HepG2 (cell line): ENCODE measurements at regions of chr11 and their contacts with region 1.

Region 1: DNA sequence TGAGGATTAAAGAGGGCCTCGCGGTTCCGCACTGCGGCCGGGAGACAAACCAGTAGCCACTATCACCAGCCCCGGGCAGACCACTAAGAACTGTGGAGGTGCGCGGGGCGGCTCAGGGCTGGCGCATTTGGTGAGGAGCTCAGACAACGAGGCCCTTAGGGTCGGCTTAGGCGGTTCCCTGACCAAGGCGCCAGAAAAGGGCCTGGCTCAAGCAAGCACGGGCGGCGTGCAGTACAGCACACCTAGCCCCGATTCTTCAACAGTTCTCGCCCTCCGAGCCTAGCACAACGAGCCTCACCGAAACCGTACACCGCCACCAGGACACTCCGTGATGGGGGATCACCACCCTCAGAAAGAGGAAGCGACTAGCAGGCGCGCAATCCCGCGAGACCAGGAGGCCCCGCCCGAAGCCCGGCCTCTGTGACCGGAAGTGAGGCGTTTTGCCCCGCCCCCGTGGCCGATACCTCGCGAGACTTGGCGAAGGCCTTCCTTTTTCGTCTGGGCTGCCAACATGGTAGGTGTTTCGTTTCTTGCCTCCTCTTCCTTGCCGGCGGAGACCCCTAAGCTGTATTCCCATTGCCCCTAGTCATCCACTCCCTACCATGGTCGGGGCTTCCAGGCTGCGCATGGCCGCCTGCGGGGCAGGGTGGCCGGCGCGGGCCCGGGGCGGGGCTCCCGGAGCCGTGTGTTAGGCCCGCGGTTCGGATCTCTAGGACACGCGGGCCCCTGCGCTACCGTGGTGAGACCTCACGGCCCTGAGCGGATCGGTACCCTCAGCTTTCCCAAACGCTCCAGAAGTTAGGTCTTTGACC is at the starts of genes RPL27A and TRIM66:
- DNase-seq: peak; percentile 92
- ATAC-seq: peak; percentile 93
- H3K4me3 ChIP-seq: peak within 1 kb of the TSS; percentile 96 to 100 (median 99)
- H3K27ac ChIP-seq: peak within 1 kb of the TSS; percentile 97
- H3K4me1 ChIP-seq: peaks cover 73% of the 10 kb centered on the region
- H3K27me3 ChIP-seq: peaks cover 0 to 7% of the 10 kb centered on the region in 2 experiments; a peak in 1 of 5 replicates
- CTCF ChIP-seq: peak; percentile 26
- EP300 ChIP-seq: no peak; a peak in 1 of 4 replicates
- POLR2A ChIP-seq: peak; percentile 99
- RAD21 ChIP-seq: peak; percentile 20; the same call in 1 of the 2 replicates
- total RNA-seq, gene RPL27A: 2,153 and 2,707 TPM in 2 replicates
- total RNA-seq, gene TRIM66: 4.9 and 5.6 TPM in 2 replicates

Region 2: GRCh38 chr11:8665222-8665621 is 17.3 kb before region 1 on chr11:
- CTCF ChIA-PET with region 1: no interaction called
- POLR2A ChIA-PET with region 1: interaction called, 11 read pairs
- in situ Hi-C with region 1: no loop called
- intact Hi-C with region 1: loop called (anchors 1 kb)
- DNase-seq: no peak
- ATAC-seq: peak; percentile 83
- H3K4me3 ChIP-seq: no peak overlapping the region
- H3K27ac ChIP-seq: peak overlapping the region; percentile 19
- H3K4me1 ChIP-seq: peaks cover 16% of the 10 kb centered on the region
- H3K27me3 ChIP-seq: no peaks in the 10 kb centered on the region
- CTCF ChIP-seq: no peak
- EP300 ChIP-seq: no peak
- POLR2A ChIP-seq: no peak
- RAD21 ChIP-seq: no peak

Region 3: DNA sequence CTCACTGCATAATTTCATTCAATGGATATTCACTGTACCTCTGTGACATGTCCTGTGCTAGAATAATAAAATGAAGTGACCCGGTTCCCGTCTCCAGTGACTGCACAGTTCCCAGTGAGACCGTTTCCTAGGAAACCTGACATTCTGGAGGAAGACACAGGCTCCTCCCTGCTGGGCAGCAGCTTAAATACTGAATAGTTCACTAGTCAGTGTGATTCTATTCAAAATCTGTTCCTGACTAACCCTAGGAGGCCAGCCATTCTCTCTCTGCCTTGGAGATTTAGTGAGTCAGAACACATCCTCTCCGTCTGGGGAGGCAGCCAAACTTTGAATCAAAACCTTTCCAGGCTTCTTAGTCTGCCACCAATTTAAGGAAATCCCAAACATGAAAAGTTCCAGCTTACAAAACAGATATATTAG is 11.3 kb before region 1 on chr11:
- CTCF ChIA-PET with region 1: no interaction called
- POLR2A ChIA-PET with region 1: no interaction called
- in situ Hi-C with region 1: no loop called
- intact Hi-C with region 1: loop called (anchors 1 kb)
- DNase-seq: no peak
- ATAC-seq: no peak
- H3K4me3 ChIP-seq: no peak overlapping the region
- H3K27ac ChIP-seq: no peak overlapping the region
- H3K4me1 ChIP-seq: no peaks in the 10 kb centered on the region
- H3K27me3 ChIP-seq: no peaks in the 10 kb centered on the region
- CTCF ChIP-seq: no peak
- EP300 ChIP-seq: no peak
- POLR2A ChIP-seq: no peak
- RAD21 ChIP-seq: no peak

Region 4: DNA sequence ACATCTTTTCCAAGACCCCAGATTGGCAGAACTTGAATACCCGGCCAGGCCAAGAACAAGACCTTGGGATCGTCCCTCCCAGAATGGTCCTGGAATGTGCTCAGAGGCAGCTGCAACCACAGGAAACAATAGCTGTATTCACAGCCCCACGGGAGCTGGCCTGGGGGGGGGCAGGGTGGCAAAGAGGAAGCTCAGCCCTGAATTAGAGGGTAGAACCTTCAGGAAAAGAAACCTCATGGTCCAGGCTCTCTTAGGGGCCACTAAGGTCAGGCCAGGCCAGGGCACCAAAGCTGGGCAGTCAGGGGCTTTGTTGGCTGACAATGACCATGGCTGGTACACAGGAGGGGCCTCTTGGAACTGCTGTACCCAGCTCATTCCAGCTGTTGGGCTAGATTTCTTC is 17.4 kb after region 1 on chr11:
- CTCF ChIA-PET with region 1: no interaction called
- POLR2A ChIA-PET with region 1: interaction called, 47 read pairs
- in situ Hi-C with region 1: no loop called
- intact Hi-C with region 1: no loop called
- DNase-seq: peak; percentile 84
- ATAC-seq: peak; percentile 56
- H3K4me3 ChIP-seq: no peak overlapping the region
- H3K27ac ChIP-seq: peak overlapping the region; percentile 63
- H3K4me1 ChIP-seq: peaks cover 35% of the 10 kb centered on the region
- H3K27me3 ChIP-seq: no peaks in the 10 kb centered on the region
- CTCF ChIP-seq: no peak
- EP300 ChIP-seq: 0 out of 4 replicates have a peak, but pooled peaks of 1 of the 2 experiments have one; percentile 29
- POLR2A ChIP-seq: 0 out of 4 replicates have a peak, but pooled peaks have one; percentile 13 to 21
- RAD21 ChIP-seq: peak; percentile 16; the same call in 1 of the 2 replicates

Region 5: GRCh38 chr11:8717876-8718753 is 35.6 kb after region 1 on chr11:
- CTCF ChIA-PET with region 1: no interaction called
- POLR2A ChIA-PET with region 1: interaction called, 12 read pairs
- in situ Hi-C with region 1: no loop called
- intact Hi-C with region 1: no loop called
- DNase-seq: peak; percentile 83
- ATAC-seq: peak; percentile 64
- H3K4me3 ChIP-seq: peak overlapping the region in 1 of 3 experiments; percentile 29; a peak in 2 of 6 replicates
- H3K27ac ChIP-seq: peak overlapping the region; percentile 86
- H3K4me1 ChIP-seq: peaks cover 98% of the 10 kb centered on the region
- H3K27me3 ChIP-seq: no peaks in the 10 kb centered on the region
- CTCF ChIP-seq: no peak
- EP300 ChIP-seq: peak in 1 of 2 experiments; percentile 23; a peak in 1 of 4 replicates
- POLR2A ChIP-seq: peak in 1 of 2 experiments; percentile 39; a peak in 1 of 4 replicates
- RAD21 ChIP-seq: no peak

Region 6: DNA sequence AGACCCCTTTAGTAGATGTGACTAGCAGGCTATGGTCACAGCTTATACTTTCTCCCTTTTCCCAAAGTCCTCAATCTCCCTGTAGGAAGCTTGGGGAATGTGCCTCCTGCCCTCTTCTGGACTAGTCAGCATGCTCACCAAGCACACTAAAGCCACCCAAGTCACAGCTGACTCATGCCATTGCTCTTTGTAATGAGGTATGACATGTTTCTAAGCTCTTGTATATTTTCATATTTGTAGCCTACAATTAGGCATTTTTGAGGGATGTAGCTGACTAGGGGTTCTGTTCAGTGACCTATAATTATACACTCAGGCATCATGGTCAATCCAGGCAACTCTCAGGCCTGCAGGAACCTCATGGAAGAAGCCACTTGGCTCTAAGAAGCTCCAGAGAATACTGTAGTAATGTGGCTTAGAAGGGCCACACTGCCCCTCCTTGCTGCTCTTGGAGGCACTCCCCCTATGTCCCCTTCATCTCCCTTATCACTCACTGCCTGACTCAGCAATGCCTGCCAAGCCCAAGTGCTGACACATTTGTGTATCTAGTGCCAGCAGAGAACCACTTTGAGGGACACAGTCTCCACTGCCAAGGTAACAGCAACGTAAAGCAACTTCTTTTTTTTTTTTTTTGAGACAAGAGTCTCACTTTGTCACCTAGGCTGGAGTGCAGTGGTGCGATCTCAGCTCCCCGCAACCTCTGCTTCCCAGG is 86.3 kb after region 1 on chr11:
- CTCF ChIA-PET with region 1: no interaction called
- POLR2A ChIA-PET with region 1: no interaction called
- in situ Hi-C with region 1: no loop called
- intact Hi-C with region 1: no loop called
- DNase-seq: peak; percentile 39
- ATAC-seq: peak; percentile 67
- H3K4me3 ChIP-seq: no peak overlapping the region
- H3K27ac ChIP-seq: no peak overlapping the region
- H3K4me1 ChIP-seq: 0 out of 2 replicates have a peak, but pooled peaks cover 7% of the 10 kb centered on the region
- H3K27me3 ChIP-seq: no peaks in the 10 kb centered on the region
- CTCF ChIP-seq: peak; percentile 46
- EP300 ChIP-seq: no peak
- POLR2A ChIP-seq: no peak
- RAD21 ChIP-seq: no peak

Region 7: DNA sequence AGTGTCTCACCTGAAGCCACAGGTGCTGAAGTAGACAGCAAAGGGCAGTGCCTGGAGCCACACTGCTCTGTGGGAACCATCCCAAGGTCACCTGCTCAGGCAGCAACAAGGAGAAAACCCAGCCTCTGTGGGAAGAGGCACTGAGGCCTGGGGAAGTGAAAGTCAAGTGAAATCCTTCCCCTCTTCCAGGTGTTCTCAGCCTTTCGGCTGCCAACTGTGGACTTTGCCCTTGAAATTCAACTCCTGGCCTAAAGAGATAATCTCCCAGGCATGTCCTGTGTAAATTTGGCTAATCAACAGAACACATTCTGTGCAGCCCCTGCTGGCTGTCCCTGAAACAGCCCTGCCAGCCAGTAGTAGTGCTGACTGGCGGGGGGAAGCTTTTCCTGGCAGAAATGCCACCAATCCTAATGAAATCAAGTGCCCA is 112.2 kb after region 1 on chr11:
- CTCF ChIA-PET with region 1: no interaction called
- POLR2A ChIA-PET with region 1: interaction called, 10 read pairs
- in situ Hi-C with region 1: no loop called
- intact Hi-C with region 1: no loop called
- DNase-seq: peak; percentile 93
- ATAC-seq: peak; percentile 99
- H3K4me3 ChIP-seq: peak overlapping the region; percentile 49 to 73 (median 62)
- H3K27ac ChIP-seq: peak overlapping the region; percentile 75
- H3K4me1 ChIP-seq: peaks cover 50% of the 10 kb centered on the region
- H3K27me3 ChIP-seq: no peaks in the 10 kb centered on the region
- CTCF ChIP-seq: peak; percentile 85
- EP300 ChIP-seq: peak; percentile 37 to 70; a peak in 2 of 4 replicates
- POLR2A ChIP-seq: peak; percentile 65 to 68; a peak in 3 of 4 replicates
- RAD21 ChIP-seq: peak; percentile 85

Region 8: GRCh38 chr11:8911029-8911826 is 228.7 kb after region 1 on chr11 and contains the start of gene AKIP1:
- CTCF ChIA-PET with region 1: no interaction called
- POLR2A ChIA-PET with region 1: interaction called, 4 read pairs
- in situ Hi-C with region 1: no loop called
- intact Hi-C with region 1: loop called (anchors 5 kb)
- DNase-seq: peak; percentile 93
- ATAC-seq: peak; percentile 94
- H3K4me3 ChIP-seq: peak within 1 kb of the TSS; percentile 82 to 92 (median 91)
- H3K27ac ChIP-seq: peak within 1 kb of the TSS; percentile 81
- H3K4me1 ChIP-seq: peaks cover 44% of the 10 kb centered on the region
- H3K27me3 ChIP-seq: no peaks in the 10 kb centered on the region; a peak in 1 of 5 replicates
- CTCF ChIP-seq: peak; percentile 10; the same call in 1 of the 2 replicates
- EP300 ChIP-seq: no peak
- POLR2A ChIP-seq: peak; percentile 27 to 82; a peak in 2 of 4 replicates
- RAD21 ChIP-seq: no peak
- total RNA-seq, gene AKIP1: 20.3 and 21.6 TPM in 2 replicates